CD4-positive, alpha-beta T cell (primary cell): ENCODE measurements at regions of chr11 and their contacts with region 1.

Region 1: DNA sequence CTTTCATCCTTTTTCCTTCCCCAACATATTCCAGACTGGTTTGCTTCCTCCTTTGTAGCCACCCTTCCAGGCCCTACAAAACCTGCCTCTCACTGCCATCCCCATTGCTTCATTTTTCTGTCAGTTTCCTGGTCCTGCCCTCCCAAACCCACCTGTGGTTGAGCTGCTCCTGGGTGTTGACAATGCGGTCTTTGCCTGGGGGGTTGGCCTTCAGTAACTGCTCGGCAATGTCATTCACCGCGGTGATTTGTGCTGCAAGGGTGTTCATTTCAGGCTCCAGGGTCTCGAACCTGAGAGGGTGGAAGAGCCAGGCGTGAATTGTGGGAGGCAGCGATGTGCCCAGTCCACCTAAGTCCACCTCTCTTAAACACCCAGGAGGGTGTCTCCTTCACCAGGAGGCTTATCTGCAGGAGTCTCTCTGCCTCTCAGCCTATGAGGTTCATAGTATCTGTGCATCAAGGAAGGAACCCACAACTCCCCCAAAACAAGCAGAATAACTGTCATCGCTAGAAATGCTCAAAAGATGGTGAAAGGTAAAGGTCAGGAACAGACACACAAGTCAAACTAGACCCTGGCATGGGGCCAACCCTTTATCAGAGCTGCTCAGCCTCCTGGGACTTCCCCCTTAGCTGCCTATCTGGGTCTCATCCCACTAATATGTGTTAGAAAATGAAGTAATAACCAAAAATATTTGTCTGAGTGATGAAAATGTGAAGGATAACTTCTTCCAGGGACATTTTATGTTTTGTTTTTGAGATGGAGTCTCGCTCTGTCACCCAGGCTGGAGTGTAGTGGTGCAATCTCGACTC is 23.9 kb upstream of the RBM4B start:
- DNase-seq: no peak
- ATAC-seq: no peak
- H3K4me3 ChIP-seq: no peak overlapping the region
- H3K4me3 Mint-ChIP-seq: no peak overlapping the region
- H3K27ac ChIP-seq: no peak overlapping the region
- H3K27ac Mint-ChIP-seq: no peak overlapping the region
- H3K4me1 ChIP-seq: no peaks in the 10 kb centered on the region
- H3K4me1 Mint-ChIP-seq: peaks cover 4% of the 10 kb centered on the region
- H3K27me3 ChIP-seq: no peaks in the 10 kb centered on the region
- H3K27me3 Mint-ChIP-seq: no peaks in the 10 kb centered on the region
- CTCF ChIP-seq: no peak

Region 2: DNA sequence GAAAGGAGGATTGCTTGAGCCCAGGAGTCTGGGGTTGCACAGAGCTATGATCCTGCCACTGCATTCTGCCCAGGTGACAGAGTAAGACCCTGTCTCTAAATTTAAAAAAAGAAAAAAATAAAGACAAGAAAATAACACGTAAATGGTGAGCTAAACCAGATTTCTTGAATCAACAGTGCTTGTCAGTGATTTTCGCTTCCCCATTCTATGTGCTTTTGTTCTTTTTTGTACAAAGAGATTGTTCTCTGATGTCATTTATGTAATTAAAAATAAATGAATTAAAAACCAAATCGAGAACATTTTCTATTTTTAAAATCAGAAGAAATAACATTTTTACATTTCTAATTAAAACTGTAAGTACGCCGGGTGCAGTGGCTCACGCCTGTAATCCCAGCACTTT is 310.3 kb before region 1 on chr11:
- CTCF ChIA-PET with region 1: no interaction called
- POLR2A ChIA-PET with region 1: no interaction called
- intact Hi-C with region 1: no loop called
- DNase-seq: no peak
- ATAC-seq: no peak
- H3K4me3 ChIP-seq: no peak overlapping the region
- H3K4me3 Mint-ChIP-seq: no peak overlapping the region
- H3K27ac ChIP-seq: no peak overlapping the region
- H3K27ac Mint-ChIP-seq: no peak overlapping the region
- H3K4me1 ChIP-seq: peaks cover 2% of the 10 kb centered on the region
- H3K4me1 Mint-ChIP-seq: peaks cover 1% of the 10 kb centered on the region
- H3K27me3 ChIP-seq: no peaks in the 10 kb centered on the region
- H3K27me3 Mint-ChIP-seq: peaks cover 10% of the 10 kb centered on the region
- CTCF ChIP-seq: no peak

Region 3: DNA sequence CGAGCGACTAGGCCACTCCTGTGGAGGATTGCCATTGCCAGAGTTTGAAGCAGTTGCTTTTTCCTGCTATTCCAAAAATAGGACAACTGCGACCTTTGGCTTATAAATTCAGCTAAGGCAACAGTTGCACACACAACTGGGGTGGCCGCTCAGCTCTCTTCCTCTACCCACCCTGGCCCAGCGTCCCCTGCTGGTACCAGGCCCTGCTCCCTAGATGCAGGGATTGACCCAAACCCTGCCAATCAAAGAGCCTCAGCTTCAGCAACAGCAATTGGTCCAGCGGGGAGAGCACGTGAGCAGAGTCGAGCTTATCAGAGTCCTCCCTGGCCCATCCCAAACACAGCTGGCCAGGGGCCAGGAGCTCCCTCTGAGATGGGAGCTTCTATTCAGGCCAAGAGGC is 843.6 kb after region 1 on chr11:
- CTCF ChIA-PET with region 1: no interaction called
- POLR2A ChIA-PET with region 1: no interaction called
- intact Hi-C with region 1: loop called in 1 of 2 experiments (anchors 10 kb)
- DNase-seq: no peak
- ATAC-seq: no peak
- H3K4me3 ChIP-seq: no peak overlapping the region
- H3K4me3 Mint-ChIP-seq: no peak overlapping the region
- H3K27ac ChIP-seq: no peak overlapping the region
- H3K27ac Mint-ChIP-seq: no peak overlapping the region
- H3K4me1 ChIP-seq: no peaks in the 10 kb centered on the region
- H3K4me1 Mint-ChIP-seq: no peaks in the 10 kb centered on the region
- H3K27me3 ChIP-seq: no peaks in the 10 kb centered on the region
- H3K27me3 Mint-ChIP-seq: peaks cover 3% of the 10 kb centered on the region
- CTCF ChIP-seq: no peak